HEK293 (cell line): ENCODE measurements at regions of chr9 and their contacts with region 1.

Region 1: GRCh38 chr9:38088006-38088925 is 19.2 kb upstream of the SHB start:
- H3K4me3 ChIP-seq: no peak overlapping the region
- H3K27ac ChIP-seq: no peak overlapping the region
- H3K4me1 ChIP-seq: no peaks in the 10 kb centered on the region
- CTCF ChIP-seq: peak; percentile 64

Region 2: DNA sequence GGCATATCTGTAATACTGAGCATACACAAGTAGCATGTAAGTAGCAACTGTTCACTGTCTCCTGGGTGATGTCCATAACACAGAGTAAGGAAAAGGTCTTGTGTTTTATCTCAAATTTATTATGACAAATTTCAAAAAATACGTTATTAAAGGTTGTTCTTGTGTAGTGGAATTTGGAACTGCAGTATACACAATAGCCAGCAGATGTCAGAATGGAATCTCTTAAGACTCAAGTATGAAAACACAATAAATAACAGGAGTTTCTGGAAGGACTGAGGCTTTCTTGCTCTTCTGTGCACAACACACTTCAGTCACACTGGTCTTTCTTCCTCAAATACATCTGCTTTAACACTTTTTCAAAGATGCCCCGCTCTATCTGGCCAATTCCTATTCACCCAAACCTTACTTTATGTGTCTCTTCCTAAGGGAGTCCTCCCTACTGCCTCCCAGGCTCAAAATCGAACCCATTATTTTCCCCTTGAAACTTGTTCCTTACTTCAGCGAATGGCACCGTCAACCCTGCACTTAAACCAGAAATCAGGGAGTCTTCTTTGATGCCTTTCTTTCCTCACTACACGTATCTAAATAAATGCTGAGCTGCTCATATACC is 505.6 kb before region 1 on chr9:
- CTCF ChIA-PET with region 1: no interaction called
- POLR2A ChIA-PET with region 1: no interaction called
- H3K4me3 ChIP-seq: no peak overlapping the region
- H3K27ac ChIP-seq: no peak overlapping the region
- H3K4me1 ChIP-seq: no peaks in the 10 kb centered on the region
- CTCF ChIP-seq: no peak

Region 3: DNA sequence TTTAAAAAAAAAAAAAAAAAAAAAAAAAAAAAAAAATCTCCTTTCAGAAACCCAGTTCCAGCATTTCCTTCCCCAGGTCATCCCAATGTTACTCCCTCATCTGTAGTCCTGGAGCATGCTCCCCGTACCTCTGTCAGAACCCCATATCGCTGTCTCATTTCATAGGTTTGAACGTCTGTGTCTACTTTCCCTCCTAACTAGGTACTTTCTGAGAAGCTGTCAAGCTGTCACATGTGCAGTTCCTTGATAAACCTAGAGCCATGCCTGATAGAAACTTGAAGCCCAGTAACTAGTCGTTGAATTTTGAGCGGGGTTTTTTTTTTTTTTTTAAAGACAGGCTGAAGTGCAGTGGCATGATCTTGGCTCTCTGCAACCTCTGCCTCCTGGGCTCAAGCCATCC is 319.0 kb before region 1 on chr9:
- CTCF ChIA-PET with region 1: no interaction called
- POLR2A ChIA-PET with region 1: no interaction called
- H3K4me3 ChIP-seq: no peak overlapping the region
- H3K27ac ChIP-seq: no peak overlapping the region
- H3K4me1 ChIP-seq: no peaks in the 10 kb centered on the region
- CTCF ChIP-seq: no peak

Region 4: DNA sequence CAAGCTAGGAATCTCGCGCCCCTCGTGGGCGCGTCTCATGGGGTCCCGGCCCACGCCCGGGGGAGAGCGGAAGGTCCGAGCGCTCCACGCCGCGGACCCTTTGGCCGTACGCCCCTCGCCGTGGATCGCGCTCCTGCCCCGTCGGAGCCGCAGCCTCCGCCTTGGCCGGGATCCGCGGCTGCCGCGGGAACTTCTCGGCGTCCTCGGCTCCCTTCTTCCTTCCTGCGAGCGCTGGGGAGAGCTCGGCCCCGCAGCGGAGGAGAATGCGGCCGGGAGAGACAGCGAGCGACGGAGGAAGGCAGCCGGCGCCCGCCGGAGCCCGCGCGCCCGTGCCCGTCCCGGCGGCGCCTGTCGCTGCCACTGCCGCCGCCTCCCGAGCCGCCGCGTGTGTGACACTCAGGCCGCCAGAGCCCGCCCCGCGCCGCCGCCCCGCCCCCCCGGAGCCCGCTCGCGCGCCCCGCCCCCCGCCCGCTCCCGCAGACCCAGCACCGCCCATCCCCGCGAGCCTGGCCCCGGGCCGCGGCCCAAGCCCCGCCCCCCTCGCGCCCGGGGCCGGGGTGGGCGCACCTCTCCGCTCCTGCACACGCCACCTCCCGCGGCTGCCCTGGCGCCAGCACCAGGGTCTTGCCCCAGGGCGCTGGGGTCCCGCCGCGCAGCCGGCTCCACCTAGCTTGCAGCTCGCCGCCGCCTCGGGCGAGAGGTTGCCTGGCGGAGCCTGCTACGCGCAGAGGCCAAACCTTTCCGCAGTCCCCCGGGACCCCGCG is 19.2 kb before region 1 on chr9 and contains the start of gene SHB:
- CTCF ChIA-PET with region 1: interaction called, 11 read pairs
- POLR2A ChIA-PET with region 1: interaction called, 4 read pairs
- H3K4me3 ChIP-seq: peak within 1 kb of the TSS; percentile 72
- H3K27ac ChIP-seq: peak within 1 kb of the TSS; percentile 87
- H3K4me1 ChIP-seq: 0 out of 2 replicates have a peak, but pooled peaks cover 2% of the 10 kb centered on the region
- CTCF ChIP-seq: peak; percentile 72

Region 5: GRCh38 chr9:38106488-38106887 is 18.2 kb after region 1 on chr9:
- CTCF ChIA-PET with region 1: interaction called, 21 read pairs
- POLR2A ChIA-PET with region 1: no interaction called
- H3K4me3 ChIP-seq: no peak overlapping the region
- H3K27ac ChIP-seq: no peak overlapping the region
- H3K4me1 ChIP-seq: no peaks in the 10 kb centered on the region
- CTCF ChIP-seq: no peak

Region 6: GRCh38 chr9:38154501-38155421 is 66.5 kb after region 1 on chr9:
- CTCF ChIA-PET with region 1: interaction called, 122 read pairs
- POLR2A ChIA-PET with region 1: no interaction called
- H3K4me3 ChIP-seq: no peak overlapping the region
- H3K27ac ChIP-seq: no peak overlapping the region
- H3K4me1 ChIP-seq: no peaks in the 10 kb centered on the region
- CTCF ChIP-seq: no peak

Region 7: GRCh38 chr9:38263532-38263931 is 175.3 kb after region 1 on chr9:
- CTCF ChIA-PET with region 1: interaction called, 25 read pairs
- POLR2A ChIA-PET with region 1: no interaction called
- H3K4me3 ChIP-seq: no peak overlapping the region
- H3K27ac ChIP-seq: no peak overlapping the region
- H3K4me1 ChIP-seq: no peaks in the 10 kb centered on the region
- CTCF ChIP-seq: no peak

Region 8: GRCh38 chr9:38423973-38424843 is 335.9 kb after region 1 on chr9 and contains the start of gene IGFBPL1:
- CTCF ChIA-PET with region 1: no interaction called
- POLR2A ChIA-PET with region 1: no interaction called
- H3K4me3 ChIP-seq: peak within 1 kb of the TSS; percentile 34
- H3K27ac ChIP-seq: no peak within 1 kb of the TSS; the same call in 1 of the 2 replicates
- H3K4me1 ChIP-seq: no peaks in the 10 kb centered on the region; the same call in 1 of the 2 replicates
- CTCF ChIP-seq: no peak